ENCODE measurements at regions of chr4 and their contacts with region 1.

Region 1: GRCh38 chr4:3047464-3048286 is 26.7 kb downstream of the HTT-AS start:
- DNase-seq: peak; percentile 95
- ATAC-seq: peak; percentile 92
- H3K4me3 ChIP-seq: peak overlapping the region in 2 of 5 experiments; percentile 6 to 30
- H3K4me3 Mint-ChIP-seq: peak overlapping the region; percentile 71
- H3K27ac ChIP-seq: peak overlapping the region; percentile 92 to 97
- H3K27ac Mint-ChIP-seq: peak overlapping the region; percentile 91
- H3K4me1 ChIP-seq: peaks cover 42 to 61% of the 10 kb centered on the region in 2 donors
- H3K4me1 Mint-ChIP-seq: peaks cover 44% of the 10 kb centered on the region
- H3K27me3 ChIP-seq: no peaks in the 10 kb centered on the region
- H3K27me3 Mint-ChIP-seq: no peaks in the 10 kb centered on the region
- CTCF ChIP-seq: peak; percentile 78

Region 2: DNA sequence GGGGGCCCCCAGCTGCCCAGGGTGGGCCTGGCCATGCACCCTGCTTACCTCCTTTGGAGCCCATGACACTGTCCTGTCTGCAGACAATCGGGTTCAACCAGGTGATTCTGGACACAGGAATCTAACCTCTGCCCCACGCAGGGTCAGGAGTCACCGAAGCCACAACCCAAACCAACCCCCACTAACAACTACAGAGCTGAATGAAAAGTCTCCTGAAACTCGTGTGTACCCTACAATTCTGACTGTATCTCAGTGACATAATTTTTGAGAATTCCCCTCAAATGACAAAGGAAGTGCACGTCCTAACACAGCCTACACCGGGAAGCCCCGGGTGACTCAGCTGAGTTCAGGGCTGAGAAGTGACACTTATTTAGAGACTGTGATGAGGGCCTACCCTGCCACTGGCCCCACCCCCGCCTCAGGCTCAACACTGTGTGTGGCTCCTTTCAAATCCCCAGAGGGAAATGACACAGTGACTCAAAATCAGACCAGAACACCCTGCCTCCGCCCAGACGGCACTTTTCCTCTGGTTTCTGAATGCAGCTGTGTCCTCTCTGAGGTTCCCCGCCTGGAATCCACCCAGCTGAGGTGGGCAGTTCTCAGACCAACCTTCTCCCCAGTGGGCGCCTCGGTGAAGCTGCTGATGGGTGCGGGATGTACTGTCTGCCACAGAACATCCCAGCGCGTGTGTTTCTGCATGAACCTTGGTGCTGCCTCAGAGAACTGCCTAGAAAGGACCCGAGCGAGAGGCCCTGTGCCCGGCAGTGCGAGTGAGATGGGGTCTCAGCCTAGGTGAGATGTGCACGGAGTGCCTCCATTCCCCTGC is 301.5 kb before region 1 on chr4:
- CTCF ChIA-PET with region 1: no interaction called
- POLR2A ChIA-PET with region 1: no interaction called
- intact Hi-C with region 1: loop called (anchors 10 kb)
- DNase-seq: peak; percentile 95
- ATAC-seq: peak; percentile 96
- H3K4me3 ChIP-seq: peak overlapping the region in 2 of 5 experiments; percentile 5 to 17
- H3K4me3 Mint-ChIP-seq: peak overlapping the region; percentile 70
- H3K27ac ChIP-seq: peak overlapping the region; percentile 93 to 95
- H3K27ac Mint-ChIP-seq: peak overlapping the region; percentile 93
- H3K4me1 ChIP-seq: peaks cover 30 to 44% of the 10 kb centered on the region in 2 donors
- H3K4me1 Mint-ChIP-seq: peaks cover 46% of the 10 kb centered on the region
- H3K27me3 ChIP-seq: no peaks in the 10 kb centered on the region
- H3K27me3 Mint-ChIP-seq: no peaks in the 10 kb centered on the region
- CTCF ChIP-seq: no peak

Region 3: GRCh38 chr4:3059943-3060342 is 12.3 kb after region 1 on chr4:
- CTCF ChIA-PET with region 1: no interaction called
- POLR2A ChIA-PET with region 1: interaction called, 4 read pairs
- intact Hi-C with region 1: loop called (anchors 1 kb)
- DNase-seq: no peak
- ATAC-seq: no peak
- H3K4me3 ChIP-seq: no peak overlapping the region
- H3K4me3 Mint-ChIP-seq: no peak overlapping the region
- H3K27ac ChIP-seq: no peak overlapping the region
- H3K27ac Mint-ChIP-seq: peak overlapping the region; percentile 70
- H3K4me1 ChIP-seq: peaks cover 13 to 18% of the 10 kb centered on the region in 2 donors
- H3K4me1 Mint-ChIP-seq: peaks cover 18% of the 10 kb centered on the region
- H3K27me3 ChIP-seq: no peaks in the 10 kb centered on the region
- H3K27me3 Mint-ChIP-seq: no peaks in the 10 kb centered on the region
- CTCF ChIP-seq: no peak

Region 4: DNA sequence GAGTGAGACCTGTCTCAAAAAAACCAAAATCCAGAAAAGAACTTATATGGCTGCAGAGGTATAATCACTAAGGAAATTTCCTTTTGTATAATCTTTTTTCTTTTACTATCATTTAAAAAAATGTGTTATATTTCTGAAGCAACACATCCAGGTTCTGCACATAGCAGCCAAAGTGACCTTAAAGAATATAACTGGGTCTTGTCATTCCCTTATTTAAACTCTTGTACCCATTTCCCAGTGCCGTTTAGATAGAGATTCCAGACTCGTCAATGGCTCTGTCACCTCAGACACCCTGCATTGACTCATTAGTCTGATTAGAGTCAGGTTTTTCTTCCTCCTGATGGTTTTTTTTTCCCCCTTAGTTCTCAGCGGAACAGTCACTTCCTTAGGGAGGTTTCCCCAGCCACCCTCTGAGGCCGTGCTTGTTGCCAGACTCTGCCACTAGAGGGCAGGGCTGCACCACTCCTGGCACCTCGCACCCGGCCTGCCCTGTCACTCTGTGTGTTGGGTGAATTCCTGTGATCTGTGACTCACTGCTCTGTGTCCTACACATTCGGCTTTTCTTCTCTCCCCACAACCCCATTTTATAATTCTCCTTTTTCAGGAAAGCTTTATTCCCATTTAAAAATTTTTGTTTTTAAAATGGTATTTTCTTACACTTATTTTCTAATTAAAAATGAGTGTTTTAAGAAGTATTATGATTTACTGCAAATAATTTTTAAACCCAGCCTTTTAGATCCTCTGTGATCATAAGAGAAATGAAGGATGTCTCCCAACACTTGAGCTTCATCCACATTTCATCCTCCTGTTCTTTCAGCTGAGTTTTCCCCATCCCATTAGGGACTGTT is 58.9 kb after region 1 on chr4:
- CTCF ChIA-PET with region 1: interaction called, 29 read pairs
- POLR2A ChIA-PET with region 1: no interaction called
- intact Hi-C with region 1: loop called (anchors 1 kb)
- DNase-seq: peak; percentile 86
- ATAC-seq: peak; percentile 99
- H3K4me3 ChIP-seq: no peak overlapping the region
- H3K4me3 Mint-ChIP-seq: no peak overlapping the region
- H3K27ac ChIP-seq: no peak overlapping the region
- H3K27ac Mint-ChIP-seq: peak overlapping the region; percentile 82
- H3K4me1 ChIP-seq: peaks cover 0 to 6% of the 10 kb centered on the region in 2 donors
- H3K4me1 Mint-ChIP-seq: peaks cover 8% of the 10 kb centered on the region
- H3K27me3 ChIP-seq: no peaks in the 10 kb centered on the region
- H3K27me3 Mint-ChIP-seq: no peaks in the 10 kb centered on the region
- CTCF ChIP-seq: peak; percentile 96

Region 5: DNA sequence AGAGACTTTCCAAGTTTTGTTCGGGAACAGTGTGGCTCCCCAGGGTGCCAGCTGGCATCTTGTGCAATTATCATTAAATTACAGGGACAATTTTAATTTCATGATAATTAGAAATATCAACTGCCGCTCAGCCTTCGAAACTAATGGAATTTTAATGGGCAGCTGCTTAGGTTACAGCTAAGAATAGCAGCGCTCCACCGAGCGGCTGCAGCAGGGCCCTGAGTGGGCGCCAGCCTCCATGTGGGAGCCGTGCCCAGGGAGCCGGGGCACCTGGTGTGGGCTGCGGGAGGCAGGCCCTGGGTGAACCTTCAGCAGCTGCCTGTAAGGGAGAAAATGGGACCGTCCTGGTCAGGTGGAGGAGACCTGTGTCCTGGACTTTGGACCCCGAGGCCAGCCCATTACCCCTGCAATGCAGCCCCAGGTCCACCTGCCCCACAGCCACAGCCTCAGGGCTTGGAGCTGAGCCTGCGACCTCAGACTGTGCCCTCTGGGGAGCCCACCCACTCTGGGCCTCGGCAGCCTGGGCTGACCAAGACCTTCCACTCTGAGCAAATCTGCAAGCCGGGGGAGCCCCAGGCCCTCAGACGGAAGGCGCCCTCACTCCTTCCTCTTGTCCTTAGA is 222.4 kb after region 1 on chr4:
- CTCF ChIA-PET with region 1: no interaction called
- POLR2A ChIA-PET with region 1: no interaction called
- intact Hi-C with region 1: no loop called
- DNase-seq: peak; percentile 2
- ATAC-seq: no peak
- H3K4me3 ChIP-seq: no peak overlapping the region
- H3K4me3 Mint-ChIP-seq: no peak overlapping the region
- H3K27ac ChIP-seq: no peak overlapping the region
- H3K27ac Mint-ChIP-seq: no peak overlapping the region
- H3K4me1 ChIP-seq: no peaks in the 10 kb centered on the region
- H3K4me1 Mint-ChIP-seq: peaks cover 10% of the 10 kb centered on the region
- H3K27me3 ChIP-seq: no peaks in the 10 kb centered on the region
- H3K27me3 Mint-ChIP-seq: no peaks in the 10 kb centered on the region
- CTCF ChIP-seq: no peak

Region 6: DNA sequence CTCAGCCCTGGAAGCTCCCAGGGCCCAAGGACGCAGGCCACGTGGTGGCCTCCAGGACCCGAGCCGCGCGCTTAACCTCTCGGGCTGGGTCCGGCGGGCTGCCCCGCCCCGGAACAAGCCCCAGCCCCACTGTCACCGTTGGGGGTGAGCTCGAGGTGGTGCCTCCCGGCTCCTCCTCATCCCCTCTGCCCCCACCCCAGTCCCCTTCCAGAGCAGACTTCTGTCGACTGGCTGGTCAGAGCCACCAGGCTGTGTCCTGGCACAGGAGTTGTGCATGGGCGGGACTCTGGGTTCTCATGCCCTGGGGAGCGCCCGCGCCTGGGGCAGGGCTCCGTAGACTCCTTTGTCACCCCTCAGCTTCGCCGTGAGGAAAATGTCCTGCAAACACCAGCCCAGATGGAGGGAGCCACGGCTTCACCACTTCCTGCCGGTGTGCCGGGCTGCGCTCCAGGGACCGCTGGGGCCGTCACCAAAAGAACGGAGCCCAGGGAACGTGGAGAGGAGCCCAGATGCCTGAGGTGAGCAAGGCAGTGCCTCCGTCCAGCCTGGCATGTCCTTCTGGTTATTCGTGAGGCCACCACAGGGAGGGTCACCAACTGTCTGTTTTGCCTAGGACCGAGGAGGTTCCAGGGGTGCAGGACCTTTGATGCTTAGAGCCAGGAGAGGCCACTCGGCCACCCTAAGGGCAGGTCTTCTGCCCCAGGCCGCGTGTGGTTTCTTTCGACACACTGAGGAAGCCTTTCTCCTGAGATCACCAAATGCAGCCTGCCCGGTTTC is 238.1 kb after region 1 on chr4:
- CTCF ChIA-PET with region 1: no interaction called
- POLR2A ChIA-PET with region 1: no interaction called
- intact Hi-C with region 1: loop called (anchors 5 kb)
- DNase-seq: no peak
- ATAC-seq: peak; percentile 91
- H3K4me3 ChIP-seq: peak overlapping the region in 3 of 5 experiments; percentile 6 to 38 (median 36)
- H3K4me3 Mint-ChIP-seq: peak overlapping the region; percentile 27
- H3K27ac ChIP-seq: no peak overlapping the region
- H3K27ac Mint-ChIP-seq: peak overlapping the region; percentile 4
- H3K4me1 ChIP-seq: peaks cover 13 to 16% of the 10 kb centered on the region in 2 donors
- H3K4me1 Mint-ChIP-seq: peaks cover 15% of the 10 kb centered on the region
- H3K27me3 ChIP-seq: peaks cover 0 to 16% (median 2%) of the 10 kb centered on the region in 4 experiments
- H3K27me3 Mint-ChIP-seq: peaks cover 11% of the 10 kb centered on the region
- CTCF ChIP-seq: no peak